GM12878 (cell line): ENCODE measurements at regions of chr4 and their contacts with region 1.

Region 1: GRCh38 chr4:22483551-22483981 is 32.3 kb downstream of the ADGRA3 start:
- DNase-seq: peak; percentile 38
- ATAC-seq: peak; percentile 48
- H3K4me3 ChIP-seq: no peak overlapping the region
- H3K27ac ChIP-seq: no peak overlapping the region
- H3K4me1 ChIP-seq: no peaks in the 10 kb centered on the region
- H3K27me3 ChIP-seq: no peaks in the 10 kb centered on the region
- CTCF ChIP-seq: no peak
- EP300 ChIP-seq: peak; percentile 62 to 78
- POLR2A ChIP-seq: no peak
- RAD21 ChIP-seq: no peak

Region 2: DNA sequence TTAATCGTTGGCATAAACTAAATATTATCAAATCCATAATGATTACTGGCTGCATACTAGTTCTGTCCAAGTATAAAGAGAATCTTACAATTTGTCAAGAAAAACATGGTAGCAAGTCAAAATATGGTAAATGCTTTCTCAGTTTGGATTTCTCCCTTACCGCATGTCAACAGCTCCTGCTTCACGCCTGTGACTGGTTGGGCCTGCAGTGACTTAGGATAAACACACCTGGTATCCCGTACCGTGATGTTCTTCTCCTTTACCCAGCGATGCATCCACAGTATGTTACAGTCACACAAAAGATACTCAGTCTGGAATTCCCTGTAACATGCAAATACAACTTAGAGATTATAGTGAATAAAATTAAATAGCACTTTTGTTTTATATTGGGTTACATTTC is 38.8 kb before region 1 on chr4:
- CTCF ChIA-PET with region 1: interaction called, 4 read pairs
- POLR2A ChIA-PET with region 1: interaction called, 4 read pairs
- RAD21 ChIA-PET with region 1: interaction called, 23 read pairs
- SMC1A ChIA-PET with region 1: interaction called, 31 read pairs
- in situ Hi-C with region 1: no loop called
- intact Hi-C with region 1: no loop called
- DNase-seq: no peak
- ATAC-seq: no peak; the same call in 1 of the 3 replicates
- H3K4me3 ChIP-seq: no peak overlapping the region
- H3K27ac ChIP-seq: no peak overlapping the region
- H3K4me1 ChIP-seq: no peaks in the 10 kb centered on the region
- H3K27me3 ChIP-seq: no peaks in the 10 kb centered on the region
- CTCF ChIP-seq: no peak
- EP300 ChIP-seq: no peak
- POLR2A ChIP-seq: no peak
- RAD21 ChIP-seq: no peak

Region 3: DNA sequence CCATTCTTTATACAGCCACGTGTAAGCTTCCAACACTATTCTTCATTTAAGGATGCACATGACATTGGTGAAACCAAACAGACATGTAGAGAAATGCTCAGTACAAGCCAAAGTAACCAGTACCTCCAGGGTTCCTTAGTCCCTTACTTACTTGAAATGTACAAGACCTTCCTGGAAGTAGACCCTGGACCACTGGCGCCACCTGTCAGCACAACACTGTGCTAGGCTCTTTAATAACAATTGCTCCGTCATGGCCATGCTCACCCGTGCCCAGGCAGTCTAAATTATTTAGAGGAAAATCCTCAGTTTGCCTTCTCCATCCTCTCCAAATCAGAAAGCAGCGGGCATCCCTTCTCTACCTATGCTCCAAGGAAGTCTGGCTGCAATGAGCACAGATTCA is 20.4 kb before region 1 on chr4:
- CTCF ChIA-PET with region 1: interaction called, 4 read pairs
- POLR2A ChIA-PET with region 1: interaction called, 6 read pairs
- RAD21 ChIA-PET with region 1: interaction called, 4 read pairs
- SMC1A ChIA-PET with region 1: interaction called, 49 read pairs
- in situ Hi-C with region 1: no loop called
- intact Hi-C with region 1: no loop called
- DNase-seq: no peak
- ATAC-seq: peak; percentile 65
- H3K4me3 ChIP-seq: no peak overlapping the region
- H3K27ac ChIP-seq: no peak overlapping the region
- H3K4me1 ChIP-seq: no peaks in the 10 kb centered on the region
- H3K27me3 ChIP-seq: no peaks in the 10 kb centered on the region
- CTCF ChIP-seq: no peak
- EP300 ChIP-seq: no peak
- POLR2A ChIP-seq: no peak
- RAD21 ChIP-seq: no peak

Region 4: GRCh38 chr4:22500831-22501719 is 17.5 kb after region 1 on chr4:
- CTCF ChIA-PET with region 1: interaction called, 23 read pairs
- POLR2A ChIA-PET with region 1: interaction called, 59 read pairs
- RAD21 ChIA-PET with region 1: interaction called, 44 read pairs
- SMC1A ChIA-PET with region 1: interaction called, 272 read pairs
- in situ Hi-C with region 1: no loop called
- intact Hi-C with region 1: loop called (anchors 2 kb)
- DNase-seq: peak; percentile 28
- ATAC-seq: peak; percentile 77
- H3K4me3 ChIP-seq: no peak overlapping the region
- H3K27ac ChIP-seq: no peak overlapping the region
- H3K4me1 ChIP-seq: no peaks in the 10 kb centered on the region
- H3K27me3 ChIP-seq: no peaks in the 10 kb centered on the region
- CTCF ChIP-seq: no peak
- EP300 ChIP-seq: peak in 1 of 2 experiments; percentile 70; a peak in 1 of 4 replicates
- POLR2A ChIP-seq: no peak
- RAD21 ChIP-seq: no peak

Region 5: GRCh38 chr4:22508379-22508778 is 24.8 kb after region 1 on chr4:
- CTCF ChIA-PET with region 1: interaction called, 8 read pairs
- POLR2A ChIA-PET with region 1: interaction called, 14 read pairs
- RAD21 ChIA-PET with region 1: interaction called, 28 read pairs
- SMC1A ChIA-PET with region 1: interaction called, 272 read pairs
- in situ Hi-C with region 1: no loop called
- intact Hi-C with region 1: no loop called
- DNase-seq: no peak
- ATAC-seq: no peak
- H3K4me3 ChIP-seq: no peak overlapping the region
- H3K27ac ChIP-seq: no peak overlapping the region
- H3K4me1 ChIP-seq: no peaks in the 10 kb centered on the region
- H3K27me3 ChIP-seq: no peaks in the 10 kb centered on the region
- CTCF ChIP-seq: no peak
- EP300 ChIP-seq: no peak
- POLR2A ChIP-seq: no peak
- RAD21 ChIP-seq: no peak

Region 6: GRCh38 chr4:22515145-22515887 is 31.8 kb after region 1 on chr4:
- CTCF ChIA-PET with region 1: interaction called, 3 read pairs
- POLR2A ChIA-PET with region 1: interaction called, 18 read pairs
- RAD21 ChIA-PET with region 1: interaction called, 6 read pairs
- SMC1A ChIA-PET with region 1: interaction called, 6 read pairs
- in situ Hi-C with region 1: no loop called
- intact Hi-C with region 1: no loop called
- DNase-seq: no peak
- ATAC-seq: peak; percentile 42
- H3K4me3 ChIP-seq: no peak overlapping the region
- H3K27ac ChIP-seq: no peak overlapping the region
- H3K4me1 ChIP-seq: no peaks in the 10 kb centered on the region
- H3K27me3 ChIP-seq: peaks cover 0 to 3% of the 10 kb centered on the region in 2 experiments; a peak in 1 of 4 replicates
- CTCF ChIP-seq: no peak; a peak in 1 of 6 replicates
- EP300 ChIP-seq: no peak
- POLR2A ChIP-seq: no peak
- RAD21 ChIP-seq: no peak

Region 7: DNA sequence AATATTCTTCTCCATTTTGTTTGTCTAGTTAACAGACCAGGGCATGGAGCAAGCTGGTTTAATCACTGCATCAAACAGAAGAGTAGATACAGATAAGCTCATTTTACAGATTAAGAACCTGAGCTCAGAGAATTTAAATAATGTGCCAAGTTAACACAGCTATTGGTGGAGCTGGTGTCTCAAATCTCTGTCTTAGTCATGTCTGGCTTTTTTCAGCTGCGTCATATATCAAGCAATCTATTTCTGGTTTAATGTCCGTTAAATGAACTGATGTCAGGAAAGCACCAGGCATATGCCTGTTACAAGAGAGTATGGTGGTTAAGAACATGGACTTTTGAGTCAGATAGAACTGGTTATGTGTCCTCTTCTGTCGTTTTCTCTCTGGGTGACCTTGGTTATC is 112.1 kb after region 1 on chr4:
- CTCF ChIA-PET with region 1: interaction called, 7 read pairs
- POLR2A ChIA-PET with region 1: interaction called, 17 read pairs
- RAD21 ChIA-PET with region 1: interaction called, 27 read pairs
- SMC1A ChIA-PET with region 1: interaction called, 23 read pairs
- in situ Hi-C with region 1: no loop called
- intact Hi-C with region 1: loop called (anchors 5 kb)
- DNase-seq: peak; percentile 17
- ATAC-seq: peak; percentile 84
- H3K4me3 ChIP-seq: no peak overlapping the region
- H3K27ac ChIP-seq: no peak overlapping the region
- H3K4me1 ChIP-seq: no peaks in the 10 kb centered on the region
- H3K27me3 ChIP-seq: no peaks in the 10 kb centered on the region
- CTCF ChIP-seq: no peak
- EP300 ChIP-seq: peak; percentile 58 to 75; a peak in 2 of 4 replicates
- POLR2A ChIP-seq: no peak
- RAD21 ChIP-seq: no peak